Dendritic cell treated with granulocyte-macrophage colony-stimulating factor and Interleukin-4, amounts not matched to agents 40 ng/mL and 50 ng/mL, for 4 days (primary cell): ENCODE measurements at regions of chrX and their contacts with region 1.

Region 1: GRCh38 chrX:71378732-71379131 is 12.6 kb downstream of the TAF1 start:
- H3K4me3 Mint-ChIP-seq: no peak overlapping the region
- H3K27ac Mint-ChIP-seq: no peak overlapping the region
- H3K4me1 Mint-ChIP-seq: peaks cover 14% of the 10 kb centered on the region
- H3K27me3 Mint-ChIP-seq: no peaks in the 10 kb centered on the region

Region 2: DNA sequence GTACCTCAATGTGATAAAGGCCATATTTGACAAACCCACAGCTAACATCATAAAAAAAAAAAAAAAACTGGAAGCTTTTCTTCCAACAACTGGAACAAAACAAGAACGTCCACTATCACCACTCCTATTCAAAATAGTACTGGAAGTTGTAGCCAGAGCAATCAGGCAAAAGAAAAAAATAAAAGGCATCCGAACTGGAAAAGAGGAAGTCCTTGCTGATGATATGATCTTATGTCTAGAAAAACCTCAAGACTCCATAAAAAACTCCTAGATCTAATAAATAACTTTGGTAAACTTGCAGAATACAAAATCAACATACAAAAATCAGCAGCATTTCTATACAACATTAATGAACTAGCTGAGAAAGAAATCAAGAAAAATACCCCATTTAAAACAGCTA is 604.5 kb before region 1 on chrX:
- intact Hi-C with region 1: no loop called
- H3K4me3 Mint-ChIP-seq: no peak overlapping the region
- H3K27ac Mint-ChIP-seq: no peak overlapping the region
- H3K4me1 Mint-ChIP-seq: no peaks in the 10 kb centered on the region
- H3K27me3 Mint-ChIP-seq: no peaks in the 10 kb centered on the region

Region 3: DNA sequence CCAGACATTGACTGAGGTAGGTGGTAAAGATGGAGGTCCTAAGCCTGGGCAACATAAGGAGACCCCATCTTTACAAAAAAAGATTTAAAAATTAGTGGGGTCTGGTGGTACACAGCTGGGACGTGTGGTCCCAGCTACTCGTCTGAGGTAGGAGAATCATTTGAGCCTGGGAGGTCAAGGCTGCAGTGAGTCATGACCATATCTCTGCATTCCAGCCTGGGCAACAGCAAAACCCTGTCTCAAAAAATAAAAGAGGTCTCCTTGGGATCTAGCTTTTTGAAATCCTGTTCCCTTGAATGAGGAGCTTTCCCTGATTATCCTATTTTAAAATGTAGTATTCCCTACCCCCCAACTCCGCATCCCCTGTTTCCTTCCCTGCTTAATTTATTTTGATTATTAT is 75.5 kb after region 1 on chrX:
- intact Hi-C with region 1: loop called (anchors 10 kb)
- H3K4me3 Mint-ChIP-seq: no peak overlapping the region
- H3K27ac Mint-ChIP-seq: no peak overlapping the region
- H3K4me1 Mint-ChIP-seq: no peaks in the 10 kb centered on the region
- H3K27me3 Mint-ChIP-seq: no peaks in the 10 kb centered on the region